ENCODE measurements at regions of chr11 and their contacts with region 1.

Region 1: DNA sequence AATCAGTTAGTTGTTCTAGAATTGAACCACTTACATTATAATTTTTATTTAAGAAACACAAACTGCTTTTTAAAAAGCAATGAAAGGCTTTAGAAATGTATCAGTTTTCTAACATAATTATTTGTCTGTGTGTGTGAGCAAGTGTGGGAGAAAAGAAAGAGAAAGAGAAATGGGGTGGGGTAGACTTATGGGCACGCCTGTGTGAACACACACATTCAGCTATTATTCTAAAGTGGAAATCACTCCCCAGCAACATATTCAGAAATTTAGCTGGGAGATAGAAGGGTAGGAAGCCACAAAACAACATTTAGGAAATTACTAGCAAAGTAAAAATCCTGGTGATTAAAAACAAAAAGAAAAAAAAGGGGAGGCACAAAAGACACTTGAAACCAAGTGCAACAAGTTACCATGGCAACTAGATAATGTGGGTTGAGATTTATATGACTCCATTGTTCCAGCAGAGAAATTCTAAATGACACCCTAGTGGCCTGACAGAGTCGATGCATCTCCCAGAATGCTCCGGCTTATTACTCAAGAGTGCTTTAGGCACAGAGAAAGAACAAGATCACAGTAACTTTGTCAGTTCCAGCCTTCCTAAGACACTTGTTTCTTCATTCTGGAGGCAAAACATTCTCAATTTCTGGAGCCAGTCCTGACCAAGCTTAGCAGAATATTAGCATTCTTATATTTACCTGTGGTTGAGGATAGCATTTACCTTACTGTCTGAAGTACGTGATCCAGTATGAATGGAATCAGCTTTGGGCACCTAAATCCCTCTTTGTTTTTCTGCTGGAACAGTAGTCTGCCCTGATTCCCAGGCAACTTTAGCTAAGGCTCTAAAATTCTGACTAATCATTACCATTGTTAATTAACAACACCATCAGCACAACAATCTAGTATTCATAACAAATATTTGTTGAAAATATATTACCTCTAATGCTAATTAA is 444.4 kb downstream of the DLG2 start:
- DNase-seq: peak; percentile 18
- H3K4me3 Mint-ChIP-seq: no peak overlapping the region
- H3K27ac Mint-ChIP-seq: peak overlapping the region; percentile 43
- H3K4me1 Mint-ChIP-seq: peaks cover 10% of the 10 kb centered on the region
- H3K27me3 Mint-ChIP-seq: no peaks in the 10 kb centered on the region
- CTCF ChIP-seq: peak; percentile 48

Region 2: GRCh38 chr11:85076373-85077330 is 106.1 kb before region 1 on chr11:
- CTCF ChIA-PET with region 1: no interaction called
- intact Hi-C with region 1: loop called (anchors 10 kb)
- DNase-seq: peak; percentile 6
- H3K4me3 Mint-ChIP-seq: no peak overlapping the region
- H3K27ac Mint-ChIP-seq: no peak overlapping the region
- H3K4me1 Mint-ChIP-seq: peaks cover 27% of the 10 kb centered on the region
- H3K27me3 Mint-ChIP-seq: no peaks in the 10 kb centered on the region
- CTCF ChIP-seq: no peak